ENCODE measurements at regions of chr18 and their contacts with region 1.

Region 1: DNA sequence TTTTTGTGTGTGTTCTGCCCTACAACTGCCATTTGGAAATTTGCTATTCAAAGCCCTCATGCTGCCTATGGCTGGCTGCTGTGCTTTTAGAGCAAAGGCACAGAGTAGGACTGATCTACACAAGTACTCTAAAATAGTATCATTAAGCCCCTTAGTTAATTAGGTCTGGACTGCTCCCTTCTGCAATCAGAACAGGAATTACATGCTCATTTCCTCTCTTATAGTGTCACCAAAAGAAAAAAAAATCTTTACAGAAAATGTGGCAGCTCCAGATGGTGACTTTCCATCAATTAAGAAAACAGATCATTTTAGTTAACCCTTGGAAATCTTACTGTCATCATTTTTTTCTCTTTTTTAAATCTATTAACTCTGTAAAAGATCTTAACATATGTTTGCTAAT is 337.5 kb downstream of the RIT2 start:
- DNase-seq: no peak
- ATAC-seq: no peak
- H3K4me3 ChIP-seq: no peak overlapping the region
- H3K4me3 Mint-ChIP-seq: no peak overlapping the region
- H3K27ac ChIP-seq: no peak overlapping the region
- H3K27ac Mint-ChIP-seq: no peak overlapping the region
- H3K4me1 ChIP-seq: no peaks in the 10 kb centered on the region
- H3K4me1 Mint-ChIP-seq: no peaks in the 10 kb centered on the region
- H3K27me3 ChIP-seq: no peaks in the 10 kb centered on the region
- H3K27me3 Mint-ChIP-seq: no peaks in the 10 kb centered on the region
- CTCF ChIP-seq: no peak

Region 2: DNA sequence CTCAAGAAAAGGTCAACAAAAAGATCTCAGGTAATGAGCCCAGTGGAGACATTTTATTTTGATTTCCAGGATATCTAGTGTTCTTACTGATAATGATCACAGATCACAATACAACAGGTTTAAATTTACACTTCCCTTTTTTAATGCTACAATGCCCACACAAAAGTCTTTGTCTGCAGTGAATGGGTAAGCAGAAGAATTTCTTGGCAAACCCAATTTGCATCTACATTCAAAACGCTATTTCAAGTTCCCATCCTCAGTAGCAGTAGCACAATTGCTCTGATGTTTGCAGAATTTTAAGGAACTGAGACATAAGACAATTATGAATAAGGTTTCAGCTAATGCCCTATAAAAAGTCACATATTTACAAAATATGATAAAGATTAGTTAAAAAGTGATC is 1752.4 kb before region 1 on chr18:
- CTCF ChIA-PET with region 1: no interaction called
- POLR2A ChIA-PET with region 1: no interaction called
- intact Hi-C with region 1: loop called in 1 of 2 experiments (anchors 5 kb)
- DNase-seq: no peak
- ATAC-seq: no peak
- H3K4me3 ChIP-seq: no peak overlapping the region
- H3K4me3 Mint-ChIP-seq: no peak overlapping the region
- H3K27ac ChIP-seq: no peak overlapping the region
- H3K27ac Mint-ChIP-seq: no peak overlapping the region
- H3K4me1 ChIP-seq: no peaks in the 10 kb centered on the region
- H3K4me1 Mint-ChIP-seq: no peaks in the 10 kb centered on the region
- H3K27me3 ChIP-seq: no peaks in the 10 kb centered on the region
- H3K27me3 Mint-ChIP-seq: no peaks in the 10 kb centered on the region
- CTCF ChIP-seq: no peak

Region 3: DNA sequence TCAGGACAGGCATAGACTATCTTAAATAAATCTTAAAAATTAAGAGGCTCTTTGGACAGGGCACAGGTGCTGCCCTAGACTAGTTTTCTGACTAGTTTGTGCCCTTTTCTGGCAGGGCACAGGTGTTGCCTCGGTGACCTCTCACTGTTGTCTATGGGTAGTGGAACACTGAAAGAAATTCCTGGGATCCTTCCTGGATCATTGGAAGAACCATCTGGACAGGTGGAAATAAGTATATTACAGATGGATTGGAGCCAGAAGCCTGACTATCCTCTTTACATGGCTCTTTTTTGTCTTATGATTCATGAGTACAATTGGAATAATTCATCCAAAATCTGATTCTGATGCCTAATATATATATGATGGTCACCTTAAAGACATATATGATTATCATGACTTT is 50.9 kb after region 1 on chr18:
- CTCF ChIA-PET with region 1: no interaction called
- POLR2A ChIA-PET with region 1: no interaction called
- intact Hi-C with region 1: no loop called
- DNase-seq: no peak
- ATAC-seq: no peak
- H3K4me3 ChIP-seq: no peak overlapping the region
- H3K4me3 Mint-ChIP-seq: no peak overlapping the region
- H3K27ac ChIP-seq: no peak overlapping the region
- H3K27ac Mint-ChIP-seq: no peak overlapping the region
- H3K4me1 ChIP-seq: no peaks in the 10 kb centered on the region
- H3K4me1 Mint-ChIP-seq: no peaks in the 10 kb centered on the region
- H3K27me3 ChIP-seq: no peaks in the 10 kb centered on the region
- H3K27me3 Mint-ChIP-seq: no peaks in the 10 kb centered on the region
- CTCF ChIP-seq: no peak